ENCODE measurements at regions of chr16 and their contacts with region 1.

Region 1: DNA sequence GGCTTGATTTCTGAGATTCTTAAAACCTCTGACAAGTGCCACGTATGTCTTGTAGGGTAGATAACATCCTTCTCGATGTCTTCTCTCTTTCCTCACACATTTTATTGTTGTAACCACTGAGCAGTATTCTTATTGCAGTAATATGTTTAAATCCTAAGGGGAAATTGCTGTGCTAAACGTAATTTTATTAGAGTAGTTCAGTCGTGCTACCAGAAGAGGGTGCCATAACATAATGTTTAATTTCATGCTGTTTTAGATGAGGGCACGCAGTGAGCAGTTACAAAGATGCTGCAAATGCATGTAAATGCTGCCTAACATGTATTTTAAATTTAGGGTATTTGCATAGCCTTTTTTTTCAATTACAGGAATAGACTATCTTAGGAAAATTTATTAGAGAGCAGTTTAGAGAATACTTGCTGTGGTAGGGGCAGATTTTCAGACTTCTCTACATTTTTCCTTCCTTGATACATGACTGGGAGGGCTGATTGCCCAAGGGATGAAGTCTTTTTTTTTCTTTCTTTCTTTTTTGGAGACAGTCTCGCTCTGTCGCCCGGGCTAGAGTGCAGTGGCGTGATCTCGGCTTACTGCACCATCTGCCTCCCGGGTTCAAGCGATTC is 51.7 kb downstream of the GAN start:
- DNase-seq: peak; percentile 77
- H3K4me3 ChIP-seq: no peak overlapping the region
- H3K27ac ChIP-seq: no peak overlapping the region
- H3K4me1 ChIP-seq: peaks cover 14% of the 10 kb centered on the region
- H3K27me3 ChIP-seq: no peaks in the 10 kb centered on the region
- CTCF ChIP-seq: peak; percentile 27 to 38
- POLR2A ChIP-seq: no peak

Region 2: DNA sequence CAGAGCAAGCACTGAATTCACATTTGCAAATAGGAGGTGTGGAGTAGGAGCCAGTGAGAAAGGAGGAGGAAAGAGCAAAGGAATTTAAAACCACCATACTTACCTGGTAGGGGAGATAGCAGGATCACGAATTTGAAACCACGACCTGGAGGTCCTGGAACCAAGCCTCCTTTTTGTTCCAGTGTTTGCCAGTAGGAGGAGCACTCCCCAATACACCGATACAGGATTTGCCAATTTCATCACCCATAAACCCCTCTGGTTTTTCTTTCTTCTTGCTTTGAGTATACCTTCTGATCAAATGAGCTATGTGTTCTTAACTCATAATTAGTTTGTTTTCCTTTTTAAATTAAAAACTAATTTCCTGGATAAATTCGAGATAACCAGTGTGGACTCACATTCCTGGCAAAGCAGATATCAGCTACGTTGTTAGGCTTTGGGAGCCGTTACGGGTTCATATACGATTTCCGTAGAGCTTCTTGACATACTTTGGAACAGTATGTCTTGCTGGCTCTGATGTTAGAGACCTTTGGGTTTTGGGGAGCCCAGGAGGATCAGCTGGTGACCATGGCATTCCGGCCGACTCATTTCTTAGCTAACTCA is 105.3 kb before region 1 on chr16:
- CTCF ChIA-PET with region 1: interaction called, 12 read pairs
- POLR2A ChIA-PET with region 1: no interaction called
- dilution Hi-C with region 1: no loop called
- intact Hi-C with region 1: loop called (anchors 1 kb)
- DNase-seq: peak; percentile 30
- H3K4me3 ChIP-seq: no peak overlapping the region
- H3K27ac ChIP-seq: no peak overlapping the region
- H3K4me1 ChIP-seq: no peaks in the 10 kb centered on the region
- H3K27me3 ChIP-seq: peaks cover 0 to 1% of the 10 kb centered on the region in 2 experiments
- CTCF ChIP-seq: peak; percentile 71 to 72
- POLR2A ChIP-seq: no peak

Region 3: DNA sequence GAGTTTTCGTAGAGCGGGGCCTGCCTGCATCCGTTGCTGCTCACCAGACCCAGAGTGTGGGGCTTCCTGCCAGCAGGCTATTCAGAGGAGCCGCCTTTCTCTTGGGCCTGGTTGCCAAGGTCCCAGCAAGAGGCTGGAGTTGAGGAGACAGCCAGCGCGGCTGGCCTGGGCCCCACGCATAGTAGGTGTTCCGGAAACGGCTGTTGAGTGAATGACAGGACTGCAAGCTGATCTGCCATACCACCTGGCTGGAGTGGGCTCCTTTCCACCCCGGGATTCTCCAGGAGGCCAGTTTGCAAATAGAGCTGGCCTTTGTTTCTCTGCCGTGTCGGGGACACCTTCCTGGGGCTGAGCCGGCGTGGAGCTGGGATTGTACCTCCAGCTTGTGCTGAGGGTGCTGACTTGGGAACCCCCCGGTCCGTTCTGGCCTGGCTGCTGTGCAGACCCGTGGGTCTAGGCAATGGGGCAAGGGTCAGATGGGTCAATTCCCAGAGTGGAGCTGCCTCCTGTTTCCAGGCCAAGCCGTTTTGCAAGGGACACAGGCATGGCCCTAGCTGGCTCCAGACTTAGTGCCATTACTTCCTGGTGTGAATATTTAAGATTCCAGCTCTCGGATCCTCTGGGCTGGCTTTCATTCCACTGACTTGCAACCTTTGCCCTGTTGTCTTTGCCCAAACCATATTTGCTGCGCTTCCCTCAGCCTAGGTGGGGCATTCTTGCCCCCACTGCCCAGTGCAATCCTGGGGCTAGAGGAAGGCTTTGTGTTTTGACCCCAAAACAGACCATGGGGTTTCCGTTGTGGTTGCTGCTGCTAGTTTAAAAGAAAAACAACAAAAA is 147.0 kb after region 1 on chr16:
- CTCF ChIA-PET with region 1: interaction called, 4 read pairs
- POLR2A ChIA-PET with region 1: no interaction called
- dilution Hi-C with region 1: no loop called
- intact Hi-C with region 1: loop called (anchors 5 kb)
- DNase-seq: peak; percentile 84
- H3K4me3 ChIP-seq: no peak overlapping the region
- H3K27ac ChIP-seq: peak overlapping the region; percentile 51
- H3K4me1 ChIP-seq: peaks cover 66% of the 10 kb centered on the region
- H3K27me3 ChIP-seq: no peaks in the 10 kb centered on the region
- CTCF ChIP-seq: no peak
- POLR2A ChIP-seq: no peak

Region 4: GRCh38 chr16:81582655-81583441 is 216.4 kb after region 1 on chr16:
- CTCF ChIA-PET with region 1: no interaction called
- POLR2A ChIA-PET with region 1: no interaction called
- dilution Hi-C with region 1: no loop called
- intact Hi-C with region 1: no loop called
- DNase-seq: no peak
- H3K4me3 ChIP-seq: no peak overlapping the region
- H3K27ac ChIP-seq: no peak overlapping the region
- H3K4me1 ChIP-seq: no peaks in the 10 kb centered on the region
- H3K27me3 ChIP-seq: no peaks in the 10 kb centered on the region
- CTCF ChIP-seq: no peak
- POLR2A ChIP-seq: no peak

Region 5: GRCh38 chr16:81696961-81697615 is 330.7 kb after region 1 on chr16:
- CTCF ChIA-PET with region 1: interaction called, 6 read pairs
- POLR2A ChIA-PET with region 1: no interaction called
- dilution Hi-C with region 1: no loop called
- intact Hi-C with region 1: loop called (anchors 1 kb)
- DNase-seq: peak; percentile 79
- H3K4me3 ChIP-seq: no peak overlapping the region
- H3K27ac ChIP-seq: peak overlapping the region; percentile 98
- H3K4me1 ChIP-seq: peaks cover 62% of the 10 kb centered on the region
- H3K27me3 ChIP-seq: no peaks in the 10 kb centered on the region
- CTCF ChIP-seq: peak; percentile 79 to 84
- POLR2A ChIP-seq: no peak

Region 6: GRCh38 chr16:81737885-81738786 is 371.7 kb after region 1 on chr16:
- CTCF ChIA-PET with region 1: interaction called, 11 read pairs
- POLR2A ChIA-PET with region 1: no interaction called
- dilution Hi-C with region 1: no loop called
- intact Hi-C with region 1: loop called (anchors 1 kb)
- DNase-seq: peak; percentile 81
- H3K4me3 ChIP-seq: peak overlapping the region in 1 of 3 experiments; percentile 40
- H3K27ac ChIP-seq: no peak overlapping the region
- H3K4me1 ChIP-seq: peaks cover 4% of the 10 kb centered on the region
- H3K27me3 ChIP-seq: no peaks in the 10 kb centered on the region
- CTCF ChIP-seq: peak; percentile 77 to 83
- POLR2A ChIP-seq: no peak

Region 7: GRCh38 chr16:81885976-81886586 is 519.7 kb after region 1 on chr16:
- CTCF ChIA-PET with region 1: no interaction called
- POLR2A ChIA-PET with region 1: no interaction called
- dilution Hi-C with region 1: no loop called
- intact Hi-C with region 1: loop called (anchors 1 kb)
- DNase-seq: peak; percentile 40
- H3K4me3 ChIP-seq: no peak overlapping the region
- H3K27ac ChIP-seq: no peak overlapping the region
- H3K4me1 ChIP-seq: no peaks in the 10 kb centered on the region
- H3K27me3 ChIP-seq: no peaks in the 10 kb centered on the region
- CTCF ChIP-seq: peak; percentile 73 to 78
- POLR2A ChIP-seq: no peak

Region 8: GRCh38 chr16:82867485-82867884 is 1501.1 kb after region 1 on chr16:
- CTCF ChIA-PET with region 1: no interaction called
- POLR2A ChIA-PET with region 1: no interaction called
- dilution Hi-C with region 1: no loop called
- intact Hi-C with region 1: no loop called
- DNase-seq: peak; percentile 30
- H3K4me3 ChIP-seq: no peak overlapping the region
- H3K27ac ChIP-seq: no peak overlapping the region
- H3K4me1 ChIP-seq: no peaks in the 10 kb centered on the region
- H3K27me3 ChIP-seq: no peaks in the 10 kb centered on the region
- CTCF ChIP-seq: no peak
- POLR2A ChIP-seq: no peak

Measured in endothelial cell of umbilical vein (primary cell).